ENCODE measurements at regions of chr14 and their contacts with region 1.

Region 1: DNA sequence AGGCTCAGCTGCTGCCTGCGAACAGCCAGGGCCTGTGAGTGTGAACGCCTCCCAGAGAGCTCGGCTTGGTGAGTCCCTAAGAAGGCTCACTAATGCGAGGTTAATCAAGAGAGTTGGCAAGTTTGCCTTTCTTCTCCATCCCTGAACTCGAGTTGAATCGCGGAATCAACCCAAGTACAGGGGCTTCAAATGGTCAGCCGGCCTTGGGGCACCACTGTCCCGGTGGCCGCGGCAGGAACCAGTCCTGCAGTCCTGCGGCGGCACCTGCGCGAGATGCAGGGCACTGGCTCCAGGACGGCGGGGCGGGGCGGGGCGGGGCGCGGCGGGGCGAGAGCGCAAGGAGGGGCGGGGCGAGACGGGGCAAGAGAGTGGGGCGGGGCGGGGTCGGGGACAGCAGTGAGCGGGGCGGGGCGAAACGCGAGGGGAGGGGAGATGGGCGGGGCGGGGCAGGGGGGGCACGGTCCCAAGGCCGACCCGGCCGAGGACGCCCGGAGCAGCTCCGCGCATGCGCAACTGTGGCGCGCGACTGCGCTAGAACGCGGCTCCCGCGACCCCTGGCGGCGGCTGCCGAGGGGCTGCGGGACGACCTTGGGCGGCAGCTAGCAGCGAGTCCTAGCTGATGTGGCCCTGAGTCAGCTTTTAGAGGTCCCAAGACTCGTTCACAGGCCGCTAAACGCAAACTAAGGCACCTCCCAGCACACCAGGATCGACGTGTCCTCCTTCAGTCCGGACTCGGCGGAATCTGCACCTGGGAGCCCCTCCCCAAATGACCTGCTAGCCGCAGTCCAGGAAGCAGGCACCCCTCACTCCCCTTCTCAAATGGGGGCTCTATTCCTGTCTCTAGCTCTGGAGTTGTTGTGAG is 58.0 kb downstream of the TTC7B start:
- DNase-seq: peak; percentile 62
- ATAC-seq: peak; percentile 98
- H3K4me3 ChIP-seq: peak overlapping the region; percentile 63
- H3K27ac ChIP-seq: peak overlapping the region; percentile 42
- H3K4me1 ChIP-seq: peaks cover 6% of the 10 kb centered on the region
- H3K27me3 ChIP-seq: no peaks in the 10 kb centered on the region; a peak in 1 of 4 replicates
- CTCF ChIP-seq: peak; percentile 76 to 91 (median 87)
- EP300 ChIP-seq: no peak
- POLR2A ChIP-seq: peak; percentile 83
- RAD21 ChIP-seq: peak; percentile 48

Region 2: GRCh38 chr14:90301668-90302090 is 456.6 kb before region 1 on chr14:
- CTCF ChIA-PET with region 1: interaction called, 14 read pairs
- POLR2A ChIA-PET with region 1: no interaction called
- RAD21 ChIA-PET with region 1: no interaction called
- SMC1A ChIA-PET with region 1: interaction called, 3 read pairs
- in situ Hi-C with region 1: loop called (anchors 5 kb)
- intact Hi-C with region 1: loop called (anchors 10 kb)
- DNase-seq: no peak
- ATAC-seq: peak; percentile 55; the same call in 2 of the 3 replicates
- H3K4me3 ChIP-seq: no peak overlapping the region
- H3K27ac ChIP-seq: no peak overlapping the region
- H3K4me1 ChIP-seq: no peaks in the 10 kb centered on the region
- H3K27me3 ChIP-seq: no peaks in the 10 kb centered on the region
- CTCF ChIP-seq: peak; percentile 12 to 47 (median 26); a peak in 3 of 6 replicates
- EP300 ChIP-seq: no peak
- POLR2A ChIP-seq: no peak
- RAD21 ChIP-seq: peak; percentile 65

Region 3: DNA sequence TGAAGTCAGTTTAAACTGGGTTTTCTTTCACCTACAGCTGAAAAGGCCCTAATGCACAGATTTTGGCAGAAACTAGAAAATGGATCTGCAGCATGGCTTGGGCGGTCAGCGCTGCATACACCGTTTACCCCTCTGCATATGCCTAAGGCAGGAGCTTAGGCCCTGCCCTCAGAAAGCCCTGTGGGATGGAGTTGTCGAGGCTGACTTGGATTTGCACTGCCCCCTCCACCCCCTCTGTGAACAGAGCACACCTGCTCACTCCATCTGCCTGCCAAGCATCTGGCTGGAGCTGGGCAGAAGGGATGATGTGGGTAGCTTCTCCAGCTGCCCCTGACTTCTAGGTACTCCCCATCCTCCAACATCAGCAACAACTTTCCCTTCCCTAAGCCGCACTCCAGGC is 16.1 kb after region 1 on chr14:
- CTCF ChIA-PET with region 1: interaction called, 18 read pairs
- POLR2A ChIA-PET with region 1: no interaction called
- RAD21 ChIA-PET with region 1: no interaction called
- SMC1A ChIA-PET with region 1: interaction called, 5 read pairs
- in situ Hi-C with region 1: no loop called
- intact Hi-C with region 1: no loop called
- DNase-seq: no peak
- ATAC-seq: no peak
- H3K4me3 ChIP-seq: no peak overlapping the region
- H3K27ac ChIP-seq: no peak overlapping the region
- H3K4me1 ChIP-seq: no peaks in the 10 kb centered on the region
- H3K27me3 ChIP-seq: no peaks in the 10 kb centered on the region; a peak in 1 of 4 replicates
- CTCF ChIP-seq: no peak
- EP300 ChIP-seq: no peak
- POLR2A ChIP-seq: no peak
- RAD21 ChIP-seq: no peak

Measured in GM12878 (cell line).